ENCODE measurements at regions of chr20 and their contacts with region 1.

Region 1: DNA sequence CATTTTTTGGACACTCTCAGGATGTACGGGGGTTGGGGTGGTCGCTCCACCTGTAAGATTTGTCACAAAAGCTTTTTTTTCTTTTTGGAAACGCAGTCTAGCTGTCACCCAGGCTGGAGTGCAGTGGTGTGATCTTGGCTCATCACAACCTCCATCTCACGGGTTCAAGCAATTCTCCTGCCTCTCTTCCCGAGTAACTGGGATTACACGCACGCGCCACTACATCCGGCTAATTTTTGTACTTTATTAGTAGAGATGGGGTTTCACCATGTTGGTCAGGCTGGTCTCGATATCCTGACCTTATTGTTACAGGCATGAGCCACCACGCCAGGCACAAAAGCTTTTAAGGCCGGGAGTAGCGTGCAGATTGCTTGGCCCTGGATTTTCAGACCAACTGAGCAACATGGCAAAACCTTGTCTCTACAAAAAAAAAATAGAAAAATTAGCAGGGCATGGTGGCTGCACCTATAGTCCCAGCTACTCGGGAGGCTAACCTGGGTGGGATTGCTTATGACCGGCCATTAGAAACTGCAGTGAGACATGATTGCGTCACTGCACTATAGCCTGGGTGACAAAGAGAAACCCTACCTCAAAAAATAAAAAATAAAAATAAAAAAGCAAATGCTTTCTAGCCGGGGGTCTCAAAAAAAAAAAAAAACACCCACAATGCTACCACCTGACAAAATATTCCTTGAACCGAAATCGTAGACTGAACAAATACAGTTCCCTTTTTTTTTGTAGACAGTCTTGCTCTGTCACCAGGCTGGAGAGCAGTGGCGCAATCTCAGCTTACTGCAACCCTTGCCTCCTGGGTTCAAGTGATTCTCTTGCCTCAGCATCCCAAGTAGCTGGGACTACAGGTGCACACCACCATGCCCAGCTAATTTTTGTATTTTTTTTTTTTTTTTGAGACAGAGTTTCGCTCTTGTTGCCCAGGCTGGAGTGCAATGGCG is 15.0 kb downstream of the RBM39 start:
- DNase-seq: no peak
- ATAC-seq: no peak
- H3K4me3 ChIP-seq: no peak overlapping the region
- H3K4me3 Mint-ChIP-seq: no peak overlapping the region
- H3K27ac ChIP-seq: no peak overlapping the region
- H3K27ac Mint-ChIP-seq: no peak overlapping the region
- H3K4me1 ChIP-seq: peaks cover 30% of the 10 kb centered on the region
- H3K4me1 Mint-ChIP-seq: peaks cover 58% of the 10 kb centered on the region
- H3K27me3 ChIP-seq: no peaks in the 10 kb centered on the region
- H3K27me3 Mint-ChIP-seq: no peaks in the 10 kb centered on the region
- CTCF ChIP-seq: no peak

Region 2: DNA sequence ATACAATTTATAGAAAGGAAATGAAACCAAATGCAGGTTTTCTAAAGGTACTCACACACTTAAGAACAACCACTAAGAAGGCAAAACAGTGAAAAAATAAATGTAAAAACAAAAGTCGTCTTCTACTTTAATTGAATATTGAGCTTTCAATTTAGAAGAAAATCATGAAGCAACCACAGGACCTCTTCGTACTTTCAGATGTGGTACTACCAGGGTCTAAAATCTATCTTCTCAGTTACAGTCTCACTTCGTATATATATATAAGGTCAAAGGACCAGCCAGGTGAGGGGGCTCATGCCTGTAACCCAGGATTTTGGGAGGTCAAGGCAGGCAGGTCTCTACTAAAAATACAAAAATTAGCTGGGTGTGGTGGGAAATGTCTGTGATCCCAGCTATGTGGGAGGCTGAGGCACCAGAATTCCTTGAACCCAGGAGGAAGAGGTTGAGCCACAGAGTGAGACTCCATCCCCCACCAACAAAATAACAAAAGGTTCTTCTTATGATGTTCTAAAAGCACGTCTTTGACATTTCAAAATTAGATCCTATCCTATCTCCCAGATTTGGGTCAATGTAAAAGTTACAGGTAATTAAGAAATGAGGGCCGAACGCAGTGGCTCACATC is 15.3 kb before region 1 on chr20:
- CTCF ChIA-PET with region 1: interaction called, 3 read pairs
- POLR2A ChIA-PET with region 1: interaction called, 3 read pairs
- intact Hi-C with region 1: loop called (anchors 2 kb)
- DNase-seq: no peak
- ATAC-seq: no peak
- H3K4me3 ChIP-seq: no peak overlapping the region
- H3K4me3 Mint-ChIP-seq: peak overlapping the region; percentile 51
- H3K27ac ChIP-seq: peak overlapping the region in 1 of 2 experiments; percentile 55
- H3K27ac Mint-ChIP-seq: peak overlapping the region; percentile 81
- H3K4me1 ChIP-seq: peaks cover 50% of the 10 kb centered on the region
- H3K4me1 Mint-ChIP-seq: peaks cover 68% of the 10 kb centered on the region
- H3K27me3 ChIP-seq: no peaks in the 10 kb centered on the region
- H3K27me3 Mint-ChIP-seq: no peaks in the 10 kb centered on the region
- CTCF ChIP-seq: no peak

Measured in CD8-positive, alpha-beta T cell (primary cell).